AG04449 (cell line): ENCODE measurements at regions of chr6 and their contacts with region 1.

Region 1: GRCh38 chr6:85923013-85923430 is 280.3 kb upstream of the SYNCRIP start:
- DNase-seq: peak; percentile 19
- H3K4me3 ChIP-seq: no peak overlapping the region
- CTCF ChIP-seq: peak; percentile 53

Region 2: GRCh38 chr6:85975957-85976356 is 52.9 kb after region 1 on chr6:
- CTCF ChIA-PET with region 1: no interaction called
- POLR2A ChIA-PET with region 1: no interaction called
- DNase-seq: no peak
- H3K4me3 ChIP-seq: no peak overlapping the region
- CTCF ChIP-seq: no peak

Region 3: GRCh38 chr6:86856937-86857563 is 934.0 kb after region 1 on chr6:
- CTCF ChIA-PET with region 1: interaction called, 12 read pairs
- POLR2A ChIA-PET with region 1: no interaction called
- DNase-seq: no peak
- H3K4me3 ChIP-seq: no peak overlapping the region
- CTCF ChIP-seq: peak; percentile 33